BJ (cell line): ENCODE measurements at regions of chr12 and their contacts with region 1.

Region 1: GRCh38 chr12:66693901-66694675 is 15.2 kb upstream of the GRIP1 start:
- DNase-seq: peak; percentile 8
- H3K4me3 ChIP-seq: no peak overlapping the region
- H3K27me3 ChIP-seq: no peaks in the 10 kb centered on the region
- CTCF ChIP-seq: peak; percentile 67

Region 2: DNA sequence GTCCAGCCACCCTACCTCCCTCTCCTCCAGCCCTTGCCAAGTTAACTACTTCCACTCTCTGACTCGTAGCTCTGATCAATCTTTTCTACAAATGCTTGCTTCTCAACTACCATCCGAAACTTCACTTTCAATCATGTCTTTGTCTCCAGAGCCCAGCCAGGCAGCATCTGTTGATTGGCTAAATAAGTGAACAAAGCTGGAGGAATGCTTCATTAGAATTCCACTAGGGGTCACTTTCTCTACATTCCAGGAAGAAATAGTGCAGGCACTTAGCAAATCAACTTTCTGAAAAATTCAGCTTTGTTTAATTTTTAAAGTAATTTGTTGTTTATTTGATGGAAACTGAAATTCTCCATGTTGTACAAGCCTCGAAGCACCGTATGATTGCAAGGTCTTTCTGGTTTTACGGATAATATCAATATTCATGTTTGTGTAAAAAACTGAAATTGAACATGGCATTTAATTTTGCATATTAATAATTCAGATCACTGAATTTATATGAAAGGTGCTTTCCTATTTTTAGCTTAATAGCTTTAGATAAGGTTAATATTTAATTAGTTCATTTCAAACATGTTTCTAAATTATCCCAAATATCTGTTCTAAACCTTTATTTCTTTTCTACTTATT is 424.2 kb before region 1 on chr12:
- CTCF ChIA-PET with region 1: interaction called, 11 read pairs
- POLR2A ChIA-PET with region 1: no interaction called
- DNase-seq: no peak
- H3K4me3 ChIP-seq: no peak overlapping the region
- H3K27me3 ChIP-seq: peaks cover 3% of the 10 kb centered on the region; the same call in 1 of the 2 replicates
- CTCF ChIP-seq: peak; percentile 72

Region 3: GRCh38 chr12:66683073-66683472 is 11.0 kb before region 1 on chr12:
- CTCF ChIA-PET with region 1: interaction called, 22 read pairs
- POLR2A ChIA-PET with region 1: no interaction called
- DNase-seq: no peak
- H3K4me3 ChIP-seq: no peak overlapping the region
- H3K27me3 ChIP-seq: peaks cover 5% of the 10 kb centered on the region; the same call in 1 of the 2 replicates
- CTCF ChIP-seq: no peak